ENCODE measurements at regions of chr2 and their contacts with region 1.

Region 1: GRCh38 chr2:64586883-64587481 is 62.9 kb downstream of the AFTPH start:
- DNase-seq: no peak
- ATAC-seq: no peak
- H3K4me3 Mint-ChIP-seq: no peak overlapping the region
- H3K27ac Mint-ChIP-seq: no peak overlapping the region
- H3K4me1 Mint-ChIP-seq: peaks cover 6% of the 10 kb centered on the region
- H3K27me3 Mint-ChIP-seq: no peaks in the 10 kb centered on the region

Region 2: GRCh38 chr2:64447317-64448040 is 139.5 kb before region 1 on chr2:
- CTCF ChIA-PET with region 1: no interaction called
- POLR2A ChIA-PET with region 1: no interaction called
- DNase-seq: no peak
- ATAC-seq: no peak
- H3K4me3 Mint-ChIP-seq: no peak overlapping the region
- H3K27ac Mint-ChIP-seq: no peak overlapping the region
- H3K4me1 Mint-ChIP-seq: no peaks in the 10 kb centered on the region
- H3K27me3 Mint-ChIP-seq: peaks cover 25% of the 10 kb centered on the region

Region 3: GRCh38 chr2:64609227-64609941 is 22.4 kb after region 1 on chr2:
- CTCF ChIA-PET with region 1: interaction called, 35 read pairs
- POLR2A ChIA-PET with region 1: no interaction called
- DNase-seq: peak; percentile 71
- ATAC-seq: peak; percentile 77
- H3K4me3 Mint-ChIP-seq: peak overlapping the region; percentile 61
- H3K27ac Mint-ChIP-seq: peak overlapping the region; percentile 67
- H3K4me1 Mint-ChIP-seq: peaks cover 25% of the 10 kb centered on the region
- H3K27me3 Mint-ChIP-seq: peaks cover 19% of the 10 kb centered on the region

Region 4: GRCh38 chr2:64617631-64618151 is 30.7 kb after region 1 on chr2:
- CTCF ChIA-PET with region 1: interaction called, 10 read pairs
- POLR2A ChIA-PET with region 1: no interaction called
- DNase-seq: no peak
- ATAC-seq: no peak
- H3K4me3 Mint-ChIP-seq: no peak overlapping the region
- H3K27ac Mint-ChIP-seq: no peak overlapping the region
- H3K4me1 Mint-ChIP-seq: peaks cover 3% of the 10 kb centered on the region
- H3K27me3 Mint-ChIP-seq: peaks cover 12% of the 10 kb centered on the region

Region 5: GRCh38 chr2:64865073-64865830 is 278.3 kb after region 1 on chr2:
- CTCF ChIA-PET with region 1: interaction called, 17 read pairs
- POLR2A ChIA-PET with region 1: no interaction called
- DNase-seq: peak; percentile 69
- ATAC-seq: peak; percentile 94
- H3K4me3 Mint-ChIP-seq: peak overlapping the region; percentile 67
- H3K27ac Mint-ChIP-seq: no peak overlapping the region
- H3K4me1 Mint-ChIP-seq: no peaks in the 10 kb centered on the region
- H3K27me3 Mint-ChIP-seq: peaks cover 2% of the 10 kb centered on the region